ENCODE measurements at regions of chr12 and their contacts with region 1.

Region 1: DNA sequence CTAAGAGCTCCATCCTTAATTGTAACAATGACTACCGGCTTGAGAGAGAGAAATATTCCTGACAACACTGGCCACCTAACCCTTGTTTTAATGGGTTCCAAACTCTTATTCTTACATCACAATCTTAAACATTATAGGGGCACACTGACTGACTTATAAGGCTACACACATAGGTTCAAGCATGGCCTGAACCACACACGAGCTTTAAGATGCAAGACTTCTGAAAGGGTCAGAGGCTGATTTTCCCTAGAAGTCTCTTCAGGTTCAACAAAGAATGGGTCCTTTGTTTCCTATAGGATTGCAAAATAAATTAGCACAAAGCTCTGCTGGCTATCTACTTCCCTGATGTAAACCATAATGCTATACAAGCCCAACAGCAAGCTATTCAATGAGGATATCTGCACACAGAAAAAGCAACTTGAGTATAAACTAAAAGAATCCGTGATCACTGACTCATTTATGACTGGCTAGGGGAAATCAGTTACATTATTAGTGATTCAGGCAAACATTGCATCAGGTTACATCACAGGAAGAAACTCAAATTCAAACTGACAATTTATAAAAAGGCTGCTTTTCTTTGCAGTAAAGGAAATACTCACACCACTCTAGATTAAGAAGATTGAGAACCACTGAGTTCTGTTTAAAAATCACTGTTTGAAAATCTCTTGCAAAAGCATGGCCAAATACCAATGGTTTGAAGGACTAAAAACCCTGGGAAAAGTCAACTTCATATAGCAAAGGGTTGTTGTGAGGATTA is 8.5 kb downstream of the BTG1 start:
- DNase-seq: no peak
- ATAC-seq: peak; percentile 16
- H3K4me3 Mint-ChIP-seq: peak overlapping the region; percentile 88
- H3K27ac Mint-ChIP-seq: peak overlapping the region; percentile 88
- H3K4me1 Mint-ChIP-seq: peaks cover 64% of the 10 kb centered on the region
- H3K27me3 Mint-ChIP-seq: no peaks in the 10 kb centered on the region

Region 2: DNA sequence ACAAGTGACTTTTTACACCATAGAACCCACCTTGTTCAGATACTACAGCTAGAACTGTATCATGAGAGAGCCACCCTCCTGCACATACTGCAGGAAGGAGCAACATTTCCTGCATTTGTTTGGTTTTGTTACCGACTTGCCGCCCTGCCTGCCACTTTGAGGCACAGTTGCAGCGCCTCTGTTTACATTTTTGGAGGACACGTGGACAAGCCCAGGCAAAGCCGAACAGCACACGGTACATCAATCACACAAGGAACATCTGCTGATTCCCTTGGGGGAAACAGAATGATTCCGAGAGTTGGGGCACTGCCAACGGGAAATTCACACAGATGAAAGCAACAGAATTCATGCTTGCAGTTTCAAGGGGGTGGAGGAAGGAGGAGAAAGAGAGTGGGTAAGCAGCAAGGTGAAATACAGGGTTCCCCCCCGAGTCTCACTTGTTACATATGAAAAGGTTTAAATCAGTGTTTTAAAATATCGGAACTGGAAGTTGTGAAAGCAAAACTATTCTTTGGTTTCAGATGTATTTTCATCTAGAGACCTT is 102.2 kb before region 1 on chr12:
- POLR2A ChIA-PET with region 1: interaction called, 20 read pairs
- DNase-seq: peak; percentile 51
- ATAC-seq: peak; percentile 32
- H3K4me3 Mint-ChIP-seq: peak overlapping the region; percentile 95
- H3K27ac Mint-ChIP-seq: peak overlapping the region; percentile 92
- H3K4me1 Mint-ChIP-seq: peaks cover 68% of the 10 kb centered on the region
- H3K27me3 Mint-ChIP-seq: no peaks in the 10 kb centered on the region

Region 3: DNA sequence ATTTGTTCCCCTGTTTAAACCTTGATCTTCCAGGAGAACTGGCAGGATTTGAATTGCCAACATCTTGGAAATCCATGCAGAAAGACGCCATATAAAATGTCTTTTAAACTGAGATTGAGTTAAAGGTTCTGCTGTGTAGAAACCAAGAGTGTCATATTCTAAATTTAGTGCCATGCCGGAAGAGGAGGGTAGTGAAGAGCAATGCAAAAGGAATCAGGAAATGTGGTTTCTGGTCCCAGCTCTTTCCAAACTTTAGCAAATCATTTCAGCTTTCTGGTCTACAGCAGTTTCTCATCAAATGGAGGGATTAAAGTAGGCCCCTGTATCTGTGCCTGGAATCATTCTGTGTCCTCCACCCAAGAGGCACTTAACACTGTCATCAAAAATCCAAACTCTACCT is 77.2 kb before region 1 on chr12:
- POLR2A ChIA-PET with region 1: no interaction called
- DNase-seq: no peak
- ATAC-seq: no peak
- H3K4me3 Mint-ChIP-seq: no peak overlapping the region
- H3K27ac Mint-ChIP-seq: no peak overlapping the region
- H3K4me1 Mint-ChIP-seq: peaks cover 27% of the 10 kb centered on the region
- H3K27me3 Mint-ChIP-seq: no peaks in the 10 kb centered on the region